ENCODE measurements at regions of chr7 and their contacts with region 1.

Region 1: DNA sequence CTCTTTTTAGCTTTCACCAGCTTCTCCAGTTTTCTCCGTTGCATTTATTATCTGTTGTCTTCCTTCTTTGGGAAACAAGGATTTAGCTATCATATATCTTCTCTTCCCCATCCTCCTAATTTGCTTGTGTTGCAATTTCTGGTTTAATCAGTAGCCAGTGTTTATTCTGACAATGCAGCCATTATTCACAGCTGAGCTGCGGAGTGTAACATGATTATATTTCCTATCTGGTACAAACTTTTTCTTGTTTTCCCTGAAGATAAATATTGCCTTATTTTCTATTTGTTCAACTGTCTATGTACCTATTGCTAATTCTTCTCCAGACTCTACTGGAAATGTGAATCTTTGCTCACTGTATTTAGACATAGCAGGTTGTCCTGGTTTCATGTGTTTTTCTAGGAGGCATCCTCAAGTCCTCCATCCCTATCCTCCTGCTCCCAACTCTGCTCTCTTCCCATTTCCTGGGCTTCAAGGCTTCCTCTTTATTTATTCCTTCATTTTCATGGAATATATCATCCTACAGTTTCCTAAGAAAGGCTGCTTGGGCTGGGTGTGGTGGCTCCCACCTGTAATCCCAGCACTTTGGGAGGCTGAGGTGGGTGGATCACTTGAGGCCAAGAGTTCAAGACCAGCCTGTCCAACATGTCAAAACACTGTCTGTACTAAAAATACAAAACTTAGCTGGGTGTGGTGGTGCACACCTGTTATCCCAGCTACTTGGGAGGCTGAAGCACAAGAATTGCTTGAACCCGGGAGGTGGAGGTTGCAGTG is 72.4 kb upstream of the KDM7A start:
- DNase-seq: no peak
- H3K4me3 Mint-ChIP-seq: no peak overlapping the region
- H3K27ac Mint-ChIP-seq: no peak overlapping the region
- H3K4me1 Mint-ChIP-seq: peaks cover 31% of the 10 kb centered on the region
- H3K27me3 Mint-ChIP-seq: no peaks in the 10 kb centered on the region

Region 2: DNA sequence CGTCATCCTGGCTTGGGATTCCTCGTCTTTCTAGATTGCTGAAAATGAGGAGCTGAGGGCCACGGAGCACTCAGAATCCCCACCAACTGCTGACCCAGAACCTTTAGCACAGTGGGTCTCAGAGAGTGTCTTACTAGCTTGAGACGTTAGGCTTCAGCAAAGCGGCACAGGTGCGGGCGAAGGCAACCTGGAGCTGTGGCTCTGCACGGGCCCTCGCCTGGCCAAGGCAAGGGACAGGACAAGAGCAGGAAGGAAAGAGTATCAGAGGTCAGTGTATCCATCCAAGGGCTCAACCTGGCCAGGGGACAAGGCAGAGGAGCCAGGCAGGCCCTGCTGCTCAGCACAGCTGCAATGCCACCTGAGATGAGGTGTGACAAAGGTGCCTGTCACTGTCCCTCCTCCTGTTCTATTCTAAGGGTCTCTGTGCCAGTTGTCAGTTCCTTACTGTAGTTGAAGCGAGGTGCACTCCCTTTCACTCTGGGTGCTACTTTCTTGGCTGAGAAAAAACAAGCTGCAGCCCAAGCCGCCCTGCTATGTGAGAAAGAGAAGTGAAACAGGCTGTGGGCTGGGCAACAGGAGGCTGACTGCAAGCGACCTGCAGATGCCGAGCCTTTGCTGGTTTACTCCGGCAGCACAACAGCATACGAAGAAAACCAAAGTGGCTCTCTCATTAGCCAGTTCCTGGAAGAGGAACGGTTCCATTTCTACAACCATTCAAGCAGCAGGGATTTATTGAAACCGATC is 39.2 kb before region 1 on chr7:
- CTCF ChIA-PET with region 1: interaction called, 7 read pairs
- POLR2A ChIA-PET with region 1: interaction called, 63 read pairs
- DNase-seq: peak; percentile 80
- H3K4me3 Mint-ChIP-seq: peak overlapping the region; percentile 58
- H3K27ac Mint-ChIP-seq: peak overlapping the region; percentile 94
- H3K4me1 Mint-ChIP-seq: peaks cover 90% of the 10 kb centered on the region
- H3K27me3 Mint-ChIP-seq: no peaks in the 10 kb centered on the region

Region 3: GRCh38 chr7:140222814-140223213 is 26.4 kb before region 1 on chr7:
- CTCF ChIA-PET with region 1: interaction called, 7 read pairs
- POLR2A ChIA-PET with region 1: interaction called, 93 read pairs
- DNase-seq: no peak
- H3K4me3 Mint-ChIP-seq: no peak overlapping the region
- H3K27ac Mint-ChIP-seq: peak overlapping the region; percentile 87
- H3K4me1 Mint-ChIP-seq: peaks cover 46% of the 10 kb centered on the region
- H3K27me3 Mint-ChIP-seq: no peaks in the 10 kb centered on the region

Region 4: GRCh38 chr7:140230861-140231770 is 18.1 kb before region 1 on chr7:
- CTCF ChIA-PET with region 1: interaction called, 19 read pairs
- POLR2A ChIA-PET with region 1: interaction called, 93 read pairs
- DNase-seq: peak; percentile 67
- H3K4me3 Mint-ChIP-seq: peak overlapping the region; percentile 90
- H3K27ac Mint-ChIP-seq: peak overlapping the region; percentile 92
- H3K4me1 Mint-ChIP-seq: peaks cover 51% of the 10 kb centered on the region
- H3K27me3 Mint-ChIP-seq: no peaks in the 10 kb centered on the region

Region 5: GRCh38 chr7:140260352-140261104 is 11.3 kb after region 1 on chr7:
- CTCF ChIA-PET with region 1: interaction called, 33 read pairs
- POLR2A ChIA-PET with region 1: interaction called, 76 read pairs
- DNase-seq: no peak
- H3K4me3 Mint-ChIP-seq: no peak overlapping the region
- H3K27ac Mint-ChIP-seq: no peak overlapping the region
- H3K4me1 Mint-ChIP-seq: peaks cover 51% of the 10 kb centered on the region
- H3K27me3 Mint-ChIP-seq: no peaks in the 10 kb centered on the region

Region 6: DNA sequence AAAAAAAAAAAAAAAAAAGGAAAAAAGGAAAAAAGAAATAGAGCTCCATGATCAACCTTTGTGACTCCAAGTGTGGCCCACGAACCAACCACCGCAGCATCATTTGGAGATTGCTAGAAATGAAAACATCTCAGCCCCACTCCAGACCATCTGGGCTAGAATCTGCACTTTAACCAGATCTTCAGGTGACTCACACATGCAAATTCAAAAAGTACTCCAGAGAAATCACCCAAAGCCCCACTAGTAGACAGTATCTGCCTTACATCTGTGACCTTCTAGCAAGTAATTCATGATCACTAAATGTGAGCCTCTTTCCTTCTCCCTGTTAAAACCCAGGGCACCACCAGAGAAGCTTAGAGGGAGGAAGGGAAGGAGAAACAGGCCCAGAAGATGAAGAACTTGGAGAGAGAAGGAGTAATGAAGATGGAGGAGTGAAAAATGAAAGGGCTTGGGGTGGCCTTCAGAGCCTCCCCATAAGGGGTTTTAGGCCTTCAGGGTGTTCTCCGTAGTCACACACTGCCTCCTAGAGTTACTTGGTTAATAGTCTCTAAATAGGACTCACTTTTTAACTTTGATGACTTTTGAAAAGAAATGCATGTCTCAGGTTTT is 55.1 kb after region 1 on chr7:
- CTCF ChIA-PET with region 1: interaction called, 14 read pairs
- POLR2A ChIA-PET with region 1: interaction called, 11 read pairs
- DNase-seq: peak; percentile 56
- H3K4me3 Mint-ChIP-seq: no peak overlapping the region
- H3K27ac Mint-ChIP-seq: peak overlapping the region; percentile 74
- H3K4me1 Mint-ChIP-seq: peaks cover 20% of the 10 kb centered on the region
- H3K27me3 Mint-ChIP-seq: no peaks in the 10 kb centered on the region